ENCODE measurements at regions of chr10 and their contacts with region 1.

Region 1: DNA sequence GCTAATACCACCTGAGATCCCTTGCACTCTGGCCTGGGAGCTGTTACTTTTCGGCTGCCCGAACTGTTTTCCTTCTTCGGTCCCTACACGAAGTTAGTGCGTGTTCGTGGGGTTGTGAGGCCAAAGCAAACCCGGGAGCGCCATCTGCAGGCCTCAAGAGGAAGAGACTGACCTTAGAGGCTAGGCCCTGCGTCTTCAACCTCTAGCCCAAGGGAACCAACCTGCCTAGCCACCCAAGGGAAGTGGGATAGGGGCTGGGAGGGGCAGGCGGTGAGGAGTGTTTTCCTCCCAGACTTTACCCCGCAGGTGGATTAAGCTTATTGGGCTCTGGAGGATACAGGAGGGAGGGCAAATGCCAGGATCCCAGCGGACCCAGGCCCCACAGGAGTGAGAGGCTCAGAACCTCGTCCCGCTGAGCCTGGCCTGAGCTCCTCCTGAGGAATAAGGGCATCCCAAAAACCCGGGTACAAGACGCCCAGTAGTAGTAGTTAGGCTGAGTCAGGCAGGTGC is 1.7 kb upstream of the PAX2 start:
- DNase-seq: peak; percentile 76
- ATAC-seq: peak; percentile 67
- H3K4me3 Mint-ChIP-seq: no peak overlapping the region
- H3K27ac Mint-ChIP-seq: no peak overlapping the region
- H3K4me1 Mint-ChIP-seq: peaks cover 30% of the 10 kb centered on the region
- H3K27me3 Mint-ChIP-seq: peaks cover 76% of the 10 kb centered on the region

Region 2: GRCh38 chr10:99123851-99124250 is 1619.8 kb before region 1 on chr10:
- CTCF ChIA-PET with region 1: no interaction called
- POLR2A ChIA-PET with region 1: no interaction called
- intact Hi-C with region 1: no loop called
- DNase-seq: no peak
- ATAC-seq: no peak
- H3K4me3 Mint-ChIP-seq: no peak overlapping the region
- H3K27ac Mint-ChIP-seq: no peak overlapping the region
- H3K4me1 Mint-ChIP-seq: no peaks in the 10 kb centered on the region
- H3K27me3 Mint-ChIP-seq: no peaks in the 10 kb centered on the region

Region 3: GRCh38 chr10:100562008-100562711 is 181.5 kb before region 1 on chr10:
- CTCF ChIA-PET with region 1: interaction called, 45 read pairs
- POLR2A ChIA-PET with region 1: no interaction called
- intact Hi-C with region 1: loop called (anchors 1 kb)
- DNase-seq: peak; percentile 90
- ATAC-seq: peak; percentile 95
- H3K4me3 Mint-ChIP-seq: no peak overlapping the region
- H3K27ac Mint-ChIP-seq: no peak overlapping the region
- H3K4me1 Mint-ChIP-seq: peaks cover 11% of the 10 kb centered on the region
- H3K27me3 Mint-ChIP-seq: peaks cover 24% of the 10 kb centered on the region

Region 4: DNA sequence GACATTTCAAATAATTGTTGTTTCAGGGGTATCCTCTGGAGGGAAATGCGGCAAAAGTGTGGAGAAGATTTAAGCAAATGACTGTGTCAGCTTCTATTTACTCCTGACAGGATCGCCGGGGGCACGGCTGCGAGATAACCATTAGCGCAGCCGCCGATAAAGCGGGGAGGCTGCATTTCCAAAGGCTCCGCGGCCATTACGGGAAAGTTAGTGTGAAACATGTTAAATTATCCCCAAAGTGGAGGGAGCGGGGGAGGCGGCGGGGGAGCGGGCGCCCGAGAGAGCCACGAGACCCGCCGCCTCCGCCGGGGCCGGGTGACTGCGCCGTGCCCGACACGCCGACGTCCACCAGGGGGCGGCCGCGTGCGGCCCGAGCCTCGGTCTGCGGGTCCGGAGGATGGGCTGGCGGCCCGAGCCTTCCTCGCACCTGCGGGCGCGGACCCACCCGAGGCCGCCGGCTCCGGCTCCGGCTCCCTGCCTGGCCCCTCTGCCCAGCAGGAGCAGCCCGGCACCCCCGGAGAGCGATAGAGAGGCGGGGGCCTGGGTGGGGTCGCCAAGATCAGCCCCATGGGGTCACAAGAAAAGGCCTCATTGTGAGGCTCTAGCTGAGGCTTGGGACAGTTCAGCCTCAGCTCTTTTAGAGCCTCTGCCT is 72.7 kb before region 1 on chr10:
- CTCF ChIA-PET with region 1: interaction called, 10 read pairs
- POLR2A ChIA-PET with region 1: no interaction called
- intact Hi-C with region 1: loop called (anchors 1 kb)
- DNase-seq: peak; percentile 81
- ATAC-seq: peak; percentile 95
- H3K4me3 Mint-ChIP-seq: no peak overlapping the region
- H3K27ac Mint-ChIP-seq: no peak overlapping the region
- H3K4me1 Mint-ChIP-seq: peaks cover 3% of the 10 kb centered on the region
- H3K27me3 Mint-ChIP-seq: peaks cover 64% of the 10 kb centered on the region

Region 5: GRCh38 chr10:100730725-100731406 is 12.8 kb before region 1 on chr10:
- CTCF ChIA-PET with region 1: interaction called, 13 read pairs
- POLR2A ChIA-PET with region 1: no interaction called
- intact Hi-C with region 1: no loop called
- DNase-seq: peak; percentile 73
- ATAC-seq: peak; percentile 68
- H3K4me3 Mint-ChIP-seq: peak overlapping the region; percentile 32
- H3K27ac Mint-ChIP-seq: no peak overlapping the region
- H3K4me1 Mint-ChIP-seq: peaks cover 33% of the 10 kb centered on the region
- H3K27me3 Mint-ChIP-seq: peaks cover 84% of the 10 kb centered on the region

Region 6: GRCh38 chr10:100827819-100828737 is 84.4 kb after region 1 on chr10:
- CTCF ChIA-PET with region 1: interaction called, 10 read pairs
- POLR2A ChIA-PET with region 1: no interaction called
- intact Hi-C with region 1: loop called (anchors 2 to 5 kb)
- DNase-seq: peak; percentile 62
- ATAC-seq: peak; percentile 48
- H3K4me3 Mint-ChIP-seq: peak overlapping the region; percentile 70
- H3K27ac Mint-ChIP-seq: no peak overlapping the region
- H3K4me1 Mint-ChIP-seq: peaks cover 24% of the 10 kb centered on the region
- H3K27me3 Mint-ChIP-seq: peaks cover 66% of the 10 kb centered on the region

Region 7: DNA sequence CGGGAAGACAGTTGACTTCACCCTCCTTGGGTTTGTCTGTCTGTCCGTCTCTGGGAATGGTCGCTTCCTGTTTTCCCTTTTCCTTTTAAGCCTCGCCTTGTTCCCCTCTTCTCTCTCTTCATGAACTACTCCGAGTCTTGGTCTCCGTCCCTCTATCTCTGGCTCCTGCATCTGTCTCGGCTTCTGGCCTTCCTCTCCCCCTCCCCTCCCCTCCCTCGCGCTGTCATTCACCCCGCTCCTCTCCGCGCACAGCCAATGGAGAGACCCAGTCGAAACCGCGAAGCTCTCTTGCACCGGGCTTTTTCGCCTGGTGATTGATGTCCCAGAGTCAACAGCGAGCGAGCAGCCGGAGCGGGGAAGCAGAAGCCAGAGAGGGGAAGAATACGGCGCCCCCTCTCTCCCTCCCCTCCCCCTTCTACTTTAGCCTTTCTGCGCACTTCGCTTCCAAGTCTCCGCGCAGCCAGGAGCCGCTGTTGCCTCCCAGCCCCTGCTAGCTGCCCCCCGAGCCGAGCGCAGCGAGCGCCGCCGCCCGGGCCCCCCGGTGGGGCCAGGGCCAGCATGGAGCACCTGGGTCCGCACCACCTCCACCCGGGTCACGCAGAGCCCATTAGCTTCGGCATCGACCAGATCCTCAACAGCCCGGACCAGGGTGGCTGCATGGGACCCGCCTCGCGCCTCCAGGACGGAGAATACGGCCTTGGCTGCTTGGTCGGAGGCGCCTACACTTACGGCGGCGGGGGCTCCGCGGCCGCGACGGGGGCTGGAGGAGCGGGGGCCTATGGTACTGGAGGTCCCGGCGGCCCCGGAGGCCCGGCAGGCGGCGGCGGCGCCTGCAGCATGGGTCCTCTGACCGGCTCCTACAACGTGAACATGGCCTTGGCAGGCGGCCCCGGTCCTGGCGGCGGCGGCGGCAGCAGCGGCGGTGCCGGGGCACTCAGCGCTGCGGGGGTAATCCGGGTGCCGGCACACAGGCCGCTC is 387.6 kb after region 1 on chr10 and contains the start of gene TLX1:
- CTCF ChIA-PET with region 1: no interaction called
- POLR2A ChIA-PET with region 1: no interaction called
- intact Hi-C with region 1: loop called (anchors 5 kb)
- DNase-seq: peak; percentile 41
- ATAC-seq: no peak
- H3K4me3 Mint-ChIP-seq: peak within 1 kb of the TSS; percentile 21
- H3K27ac Mint-ChIP-seq: no peak within 1 kb of the TSS
- H3K4me1 Mint-ChIP-seq: peaks cover 24% of the 10 kb centered on the region
- H3K27me3 Mint-ChIP-seq: peaks cover 76% of the 10 kb centered on the region
- total RNA-seq, gene TLX1: not detected

Region 8: GRCh38 chr10:101222683-101223273 is 479.1 kb after region 1 on chr10:
- CTCF ChIA-PET with region 1: no interaction called
- POLR2A ChIA-PET with region 1: no interaction called
- intact Hi-C with region 1: loop called in 1 of 2 experiments (anchors 5 kb)
- DNase-seq: no peak
- ATAC-seq: no peak
- H3K4me3 Mint-ChIP-seq: no peak overlapping the region
- H3K27ac Mint-ChIP-seq: no peak overlapping the region
- H3K4me1 Mint-ChIP-seq: peaks cover 36% of the 10 kb centered on the region
- H3K27me3 Mint-ChIP-seq: peaks cover 83% of the 10 kb centered on the region

Region 9: GRCh38 chr10:101611096-101611905 is 867.6 kb after region 1 on chr10:
- CTCF ChIA-PET with region 1: no interaction called
- POLR2A ChIA-PET with region 1: no interaction called
- intact Hi-C with region 1: no loop called
- DNase-seq: peak; percentile 49
- ATAC-seq: peak; percentile 84
- H3K4me3 Mint-ChIP-seq: no peak overlapping the region
- H3K27ac Mint-ChIP-seq: peak overlapping the region; percentile 65
- H3K4me1 Mint-ChIP-seq: peaks cover 8% of the 10 kb centered on the region
- H3K27me3 Mint-ChIP-seq: no peaks in the 10 kb centered on the region